ENCODE measurements at regions of chr2 and their contacts with region 1.

Region 1: GRCh38 chr2:46469116-46469515 is 10.2 kb upstream of the TMEM247 start:
- DNase-seq: no peak
- ATAC-seq: no peak
- H3K4me3 ChIP-seq: no peak overlapping the region
- H3K27ac ChIP-seq: no peak overlapping the region
- H3K4me1 ChIP-seq: no peaks in the 10 kb centered on the region
- H3K27me3 ChIP-seq: no peaks in the 10 kb centered on the region

Region 2: DNA sequence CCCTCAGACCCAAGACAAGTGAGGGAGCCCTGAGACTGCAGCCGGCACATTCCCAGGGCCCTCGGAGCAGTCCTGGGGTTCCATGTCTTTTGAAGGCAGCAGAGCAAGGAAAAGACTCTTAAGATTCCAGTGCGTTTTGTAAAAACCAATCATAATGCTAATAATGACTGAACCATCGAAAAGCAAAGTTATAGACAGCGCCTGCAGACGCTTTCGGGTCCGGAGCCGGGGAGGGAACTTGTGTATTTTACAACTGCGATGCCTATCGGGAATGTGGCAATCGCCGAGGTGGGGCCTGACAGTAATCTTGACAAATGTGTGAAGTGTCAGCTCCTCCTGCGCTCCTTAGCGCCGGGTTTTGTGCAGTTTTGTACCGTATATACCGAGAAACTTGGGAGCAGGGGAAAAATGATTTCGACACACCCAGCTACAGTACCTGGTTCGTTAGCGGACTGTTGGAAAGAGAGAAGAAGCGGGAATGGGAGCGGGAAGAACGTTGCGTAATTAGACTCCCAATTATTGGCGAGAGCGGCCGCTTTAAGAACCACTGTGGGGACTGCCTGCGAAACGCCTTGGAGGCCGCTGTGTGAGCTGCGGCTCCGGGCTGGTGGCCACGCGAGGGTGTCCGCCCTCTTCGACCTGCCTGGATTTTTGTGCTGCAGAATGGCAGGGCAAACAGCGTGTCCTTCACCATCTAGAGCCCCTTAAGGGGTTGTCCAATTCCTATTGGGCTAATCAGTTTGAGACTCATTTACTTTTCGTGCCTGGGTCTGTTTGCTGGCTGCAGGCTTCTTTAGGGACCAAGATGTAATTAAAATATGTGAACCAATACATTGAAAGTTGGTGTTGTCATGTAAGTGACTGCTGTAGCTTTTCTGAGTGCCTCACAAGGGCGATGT is 169.5 kb before region 1 on chr2:
- intact Hi-C with region 1: no loop called
- DNase-seq: peak; percentile 80 to 91 (median 88)
- ATAC-seq: peak; percentile 42 to 45
- H3K4me3 ChIP-seq: peak overlapping the region; percentile 93
- H3K27ac ChIP-seq: peak overlapping the region; percentile 83
- H3K4me1 ChIP-seq: peaks cover 10% of the 10 kb centered on the region
- H3K27me3 ChIP-seq: no peaks in the 10 kb centered on the region

Region 3: DNA sequence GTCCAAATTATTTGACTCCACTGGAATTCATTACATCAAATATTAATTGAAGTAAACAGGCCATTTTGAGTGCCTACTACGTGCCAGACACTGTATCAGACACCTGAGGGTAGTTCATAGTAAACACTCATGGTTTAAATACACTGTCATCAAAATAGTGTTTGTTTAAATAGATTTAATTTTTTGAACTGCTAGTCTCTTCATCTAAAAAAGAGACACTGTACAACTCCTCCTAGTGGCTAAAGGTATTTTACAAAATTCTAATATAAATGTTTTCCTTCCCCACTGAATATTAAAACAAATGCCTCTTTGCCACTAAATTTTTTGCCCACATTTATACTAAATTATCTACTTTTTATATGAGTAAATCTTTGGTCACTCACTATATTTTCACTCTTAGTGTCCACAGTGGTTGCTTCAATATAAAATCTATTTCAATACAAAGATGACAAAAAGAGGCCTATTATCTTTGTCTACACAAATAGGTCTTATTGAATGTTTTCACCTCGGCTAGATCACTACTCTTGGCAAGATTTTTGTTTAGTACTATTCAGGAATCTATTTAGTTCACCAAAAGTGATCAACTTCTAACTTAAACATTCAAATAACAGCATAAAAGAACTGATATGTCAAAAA is 132.3 kb after region 1 on chr2:
- intact Hi-C with region 1: loop called in 2 of 4 experiments (anchors 5 kb)
- DNase-seq: no peak
- ATAC-seq: no peak
- H3K4me3 ChIP-seq: no peak overlapping the region
- H3K27ac ChIP-seq: no peak overlapping the region
- H3K4me1 ChIP-seq: no peaks in the 10 kb centered on the region
- H3K27me3 ChIP-seq: no peaks in the 10 kb centered on the region

Measured in right cardiac atrium (tissue), 5 donors.